Activated CD4-positive, alpha-beta T cell treated with anti-CD3 and anti-CD28 coated beads for 36 hours (primary cell): ENCODE measurements at regions of chr20 and their contacts with region 1.

Region 1: DNA sequence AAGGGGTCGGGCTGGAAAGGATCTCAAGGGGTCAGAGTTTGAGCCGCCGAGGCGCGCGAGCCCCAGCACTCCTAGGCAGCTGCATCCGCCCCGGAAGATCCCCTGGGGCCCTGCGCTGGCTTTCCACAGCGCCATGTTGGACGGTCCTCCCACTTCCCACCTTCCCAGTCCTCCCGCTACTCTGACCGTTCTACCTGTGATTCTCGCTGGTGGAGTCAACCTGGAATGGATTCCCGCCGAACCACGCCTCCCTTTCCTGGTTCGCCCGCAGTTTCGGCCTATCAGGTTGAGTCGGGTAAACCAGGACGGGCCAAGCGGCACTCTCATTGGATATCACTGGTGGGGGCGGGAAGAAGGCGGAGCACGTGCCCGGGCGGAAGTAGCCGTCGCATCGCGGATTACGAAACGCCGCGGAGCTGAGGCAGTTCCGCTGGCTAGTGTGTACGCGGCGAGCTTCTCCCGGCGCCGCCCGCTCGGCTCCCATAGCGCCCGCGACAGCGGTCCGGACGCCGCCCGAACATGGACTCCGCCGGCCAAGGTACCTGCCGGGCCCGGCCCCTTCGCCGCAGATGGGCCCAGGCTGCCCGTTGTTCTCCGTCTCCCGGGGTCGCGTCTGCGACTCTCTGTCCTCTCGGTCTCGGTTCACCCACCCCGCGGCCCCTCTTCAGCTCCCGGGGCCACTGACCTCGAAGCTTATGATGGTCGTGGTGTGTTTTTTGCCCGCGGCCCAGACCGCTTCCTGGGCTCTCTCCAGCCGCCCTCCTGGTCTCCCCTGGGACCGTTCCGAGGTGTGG is at the start of gene TPD52L2:
- DNase-seq: peak; percentile 99
- ATAC-seq: peak; percentile 86
- H3K4me3 Mint-ChIP-seq: peak within 1 kb of the TSS; percentile 79
- H3K27ac Mint-ChIP-seq: peak within 1 kb of the TSS; percentile 92
- H3K4me1 Mint-ChIP-seq: peaks cover 24% of the 10 kb centered on the region
- H3K27me3 Mint-ChIP-seq: no peaks in the 10 kb centered on the region
- total RNA-seq, gene TPD52L2: 54.0 to 56.3 TPM

Region 2: GRCh38 chr20:63216041-63216848 is 648.8 kb before region 1 on chr20 and contains the start of gene YTHDF1:
- CTCF ChIA-PET with region 1: no interaction called
- POLR2A ChIA-PET with region 1: no interaction called
- intact Hi-C with region 1: loop called in 1 of 2 experiments (anchors 10 kb)
- DNase-seq: peak; percentile 98
- ATAC-seq: peak; percentile 98
- H3K4me3 Mint-ChIP-seq: peak within 1 kb of the TSS; percentile 92
- H3K27ac Mint-ChIP-seq: peak within 1 kb of the TSS; percentile 88
- H3K4me1 Mint-ChIP-seq: peaks cover 43% of the 10 kb centered on the region
- H3K27me3 Mint-ChIP-seq: peaks cover 4% of the 10 kb centered on the region
- total RNA-seq, gene YTHDF1: 32.2 to 32.6 TPM

Region 3: DNA sequence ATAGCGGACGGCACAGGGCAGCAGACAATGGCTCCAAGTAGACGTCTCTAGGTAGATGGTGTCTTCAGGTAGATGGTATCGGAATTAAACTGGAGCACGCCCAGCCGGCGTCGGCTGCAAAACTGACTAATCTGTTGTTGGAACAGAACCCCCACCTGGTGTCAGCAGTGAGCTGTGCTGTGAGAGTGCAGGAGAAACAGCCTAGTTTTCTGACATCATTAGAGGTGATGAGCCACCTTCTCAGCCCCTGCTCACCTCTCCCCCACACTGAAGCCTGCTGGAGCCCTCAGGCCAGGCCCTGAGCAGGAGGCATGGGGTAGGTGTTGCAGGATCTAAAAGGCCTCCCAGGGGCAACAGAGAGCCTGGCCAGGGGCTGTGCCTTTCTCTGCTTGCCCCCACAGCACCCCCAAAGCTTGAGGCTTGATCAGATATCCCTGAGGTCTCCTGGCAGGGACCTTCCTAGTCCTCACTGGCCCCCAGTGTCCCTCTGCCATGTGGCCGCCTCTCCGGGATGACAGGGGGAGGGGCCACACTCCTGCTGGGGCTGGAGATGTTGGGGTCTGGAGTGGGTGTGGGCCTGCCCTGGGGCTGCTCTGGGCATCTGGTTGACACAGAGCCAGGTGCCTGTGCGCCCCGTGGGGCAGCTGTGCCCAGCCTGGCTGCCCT is 284.1 kb before region 1 on chr20:
- CTCF ChIA-PET with region 1: no interaction called
- POLR2A ChIA-PET with region 1: no interaction called
- intact Hi-C with region 1: loop called in 1 of 2 experiments (anchors 1 kb)
- DNase-seq: peak; percentile 88
- ATAC-seq: peak; percentile 100
- H3K4me3 Mint-ChIP-seq: no peak overlapping the region
- H3K27ac Mint-ChIP-seq: no peak overlapping the region
- H3K4me1 Mint-ChIP-seq: peaks cover 4% of the 10 kb centered on the region
- H3K27me3 Mint-ChIP-seq: peaks cover 2% of the 10 kb centered on the region

Region 4: GRCh38 chr20:63707549-63708300 is 157.3 kb before region 1 on chr20 and contains the starts of genes ARFRP1 and ZGPAT:
- CTCF ChIA-PET with region 1: interaction called, 6 read pairs
- POLR2A ChIA-PET with region 1: interaction called, 5 read pairs
- intact Hi-C with region 1: loop called (anchors 1 to 2 kb)
- DNase-seq: peak; percentile 94
- ATAC-seq: peak; percentile 89
- H3K4me3 Mint-ChIP-seq: peak within 1 kb of the TSS; percentile 95
- H3K27ac Mint-ChIP-seq: peak within 1 kb of the TSS; percentile 90
- H3K4me1 Mint-ChIP-seq: peaks cover 44% of the 10 kb centered on the region
- H3K27me3 Mint-ChIP-seq: no peaks in the 10 kb centered on the region
- total RNA-seq, gene ARFRP1: 36.4 to 52.0 TPM
- total RNA-seq, gene ZGPAT: 15.3 to 21.9 TPM

Region 5: DNA sequence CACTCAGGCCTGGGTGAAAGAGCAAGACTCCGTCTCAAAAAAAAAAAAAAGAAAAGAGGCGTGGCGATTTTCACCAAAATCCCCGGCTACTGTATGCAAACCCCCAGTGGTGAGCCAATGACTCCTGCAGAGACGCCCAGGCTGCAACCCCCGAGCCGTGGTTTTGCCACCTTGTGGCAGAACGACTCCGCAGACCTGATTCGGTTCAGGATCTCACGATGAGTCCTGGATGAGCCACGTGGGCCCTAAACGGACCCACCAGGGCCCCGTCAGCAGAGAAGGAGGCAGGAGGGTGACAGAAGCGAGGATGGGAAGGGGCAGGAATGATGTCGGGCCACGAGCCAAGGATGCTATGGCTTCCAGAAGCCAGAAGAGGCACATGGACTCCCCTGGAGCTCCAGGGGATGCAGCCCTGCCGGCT is 83.0 kb before region 1 on chr20:
- CTCF ChIA-PET with region 1: interaction called, 15 read pairs
- POLR2A ChIA-PET with region 1: no interaction called
- intact Hi-C with region 1: loop called (anchors 1 to 5 kb)
- DNase-seq: peak; percentile 84
- ATAC-seq: peak; percentile 94
- H3K4me3 Mint-ChIP-seq: no peak overlapping the region
- H3K27ac Mint-ChIP-seq: peak overlapping the region; percentile 28
- H3K4me1 Mint-ChIP-seq: peaks cover 19% of the 10 kb centered on the region
- H3K27me3 Mint-ChIP-seq: no peaks in the 10 kb centered on the region

Region 6: GRCh38 chr20:63955827-63956663 is 91.0 kb after region 1 on chr20 and contains the start of gene UCKL1:
- CTCF ChIA-PET with region 1: interaction called, 3 read pairs
- POLR2A ChIA-PET with region 1: no interaction called
- intact Hi-C with region 1: loop called in 1 of 2 experiments (anchors 1 kb)
- DNase-seq: peak; percentile 95
- ATAC-seq: peak; percentile 78
- H3K4me3 Mint-ChIP-seq: peak within 1 kb of the TSS; percentile 77
- H3K27ac Mint-ChIP-seq: peak within 1 kb of the TSS; percentile 89
- H3K4me1 Mint-ChIP-seq: peaks cover 37% of the 10 kb centered on the region
- H3K27me3 Mint-ChIP-seq: no peaks in the 10 kb centered on the region
- total RNA-seq, gene UCKL1: 28.3 to 32.2 TPM

Region 7: GRCh38 chr20:64024141-64024990 is 159.3 kb after region 1 on chr20:
- CTCF ChIA-PET with region 1: no interaction called
- POLR2A ChIA-PET with region 1: no interaction called
- intact Hi-C with region 1: no loop called
- DNase-seq: no peak
- ATAC-seq: no peak
- H3K4me3 Mint-ChIP-seq: no peak overlapping the region
- H3K27ac Mint-ChIP-seq: no peak overlapping the region
- H3K4me1 Mint-ChIP-seq: no peaks in the 10 kb centered on the region
- H3K27me3 Mint-ChIP-seq: no peaks in the 10 kb centered on the region